Activated CD4-positive, alpha-beta T cell treated with anti-CD3 and anti-CD28 coated beads, Interleukin-2, amount 10 ng/mL, durations not matched to agents 24 days and 14 days (primary cell): ENCODE measurements at regions of chr7 and their contacts with region 1.

Region 1: GRCh38 chr7:34417781-34418180 is 240.2 kb upstream of the NPSR1 start:
- DNase-seq: no peak
- H3K4me3 Mint-ChIP-seq: no peak overlapping the region
- H3K27ac Mint-ChIP-seq: no peak overlapping the region
- H3K4me1 Mint-ChIP-seq: no peaks in the 10 kb centered on the region
- H3K27me3 Mint-ChIP-seq: no peaks in the 10 kb centered on the region

Region 2: DNA sequence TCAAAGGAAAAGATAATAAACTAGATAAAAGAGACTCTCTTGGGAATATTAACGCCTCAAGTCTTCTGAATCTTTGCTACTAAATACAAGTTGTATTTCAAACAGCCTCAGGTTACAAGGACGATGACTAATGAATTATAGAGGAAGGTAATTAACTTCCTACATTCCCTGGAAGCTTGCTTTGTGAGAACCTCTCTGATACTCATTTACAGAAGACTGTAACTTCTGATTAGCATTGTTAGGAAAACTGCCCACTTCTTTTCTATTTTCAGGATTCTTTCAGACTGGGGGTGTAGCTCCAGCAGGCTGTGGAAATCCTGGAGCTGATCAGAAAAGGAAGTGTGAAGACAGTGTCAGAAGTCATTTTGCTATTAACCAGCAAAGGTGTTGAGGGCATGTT is 76.5 kb before region 1 on chr7:
- intact Hi-C with region 1: no loop called
- DNase-seq: no peak
- H3K4me3 Mint-ChIP-seq: no peak overlapping the region
- H3K27ac Mint-ChIP-seq: no peak overlapping the region
- H3K4me1 Mint-ChIP-seq: no peaks in the 10 kb centered on the region
- H3K27me3 Mint-ChIP-seq: no peaks in the 10 kb centered on the region

Region 3: GRCh38 chr7:34471844-34472243 is 54.1 kb after region 1 on chr7:
- intact Hi-C with region 1: loop called (anchors 10 kb)
- DNase-seq: peak; percentile 17
- H3K4me3 Mint-ChIP-seq: no peak overlapping the region
- H3K27ac Mint-ChIP-seq: no peak overlapping the region
- H3K4me1 Mint-ChIP-seq: no peaks in the 10 kb centered on the region
- H3K27me3 Mint-ChIP-seq: no peaks in the 10 kb centered on the region